ENCODE measurements at regions of chr22 and their contacts with region 1.

Region 1: DNA sequence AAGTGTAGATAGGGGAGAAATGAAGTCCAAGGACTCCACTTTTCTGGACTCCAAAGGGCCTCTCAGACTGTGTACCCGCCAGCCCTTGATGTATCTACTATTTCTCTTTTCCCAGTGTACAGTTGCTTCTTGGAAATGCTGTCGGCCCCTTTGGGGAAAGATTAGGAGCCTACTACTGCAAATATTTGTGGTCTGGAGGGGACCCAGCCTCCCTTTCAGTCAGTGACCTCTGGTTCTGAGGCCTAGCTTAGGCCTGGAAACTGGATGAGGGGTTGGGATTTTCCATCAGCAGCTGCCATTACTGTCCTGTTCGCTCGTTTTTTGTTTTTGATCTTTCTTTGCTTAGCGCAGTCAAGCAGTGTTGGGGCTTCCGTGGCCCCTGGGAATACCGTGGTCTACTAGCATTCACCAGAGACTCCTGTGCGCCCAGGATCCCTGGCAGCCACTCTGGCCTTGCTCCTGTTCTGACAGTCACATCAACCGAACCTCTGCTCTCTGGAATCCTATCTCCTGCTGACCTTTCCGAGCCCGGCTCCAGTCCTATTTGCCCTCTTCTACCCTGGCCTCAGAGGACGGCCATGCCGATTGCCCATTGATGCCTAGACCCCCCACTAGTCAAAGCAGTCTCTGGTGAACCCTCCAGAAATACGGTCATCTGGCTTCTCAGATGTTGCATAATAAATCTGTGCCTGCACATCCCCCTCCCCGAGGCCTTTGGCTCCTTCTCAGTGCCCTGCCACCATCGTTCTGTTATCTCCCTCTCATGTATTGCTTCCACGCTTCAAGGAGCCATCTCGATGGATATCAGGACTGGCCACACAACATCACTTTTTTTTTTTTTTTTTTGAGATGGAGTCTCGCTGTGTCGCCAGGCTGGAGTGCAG is 1.3 kb upstream of the RRP7A start:
- DNase-seq: no peak
- ATAC-seq: no peak
- H3K4me3 ChIP-seq: no peak overlapping the region
- H3K4me3 Mint-ChIP-seq: peak overlapping the region; percentile 30 to 96 (median 54)
- H3K27ac ChIP-seq: no peak overlapping the region
- H3K27ac Mint-ChIP-seq: peak overlapping the region in 8 of 9 donors; percentile 29 to 97 (median 42)
- H3K4me1 ChIP-seq: peaks cover 0 to 8% of the 10 kb centered on the region in 2 donors
- H3K4me1 Mint-ChIP-seq: peaks cover 5 to 20% (median 13%) of the 10 kb centered on the region in 7 donors
- H3K27me3 ChIP-seq: no peaks in the 10 kb centered on the region
- H3K27me3 Mint-ChIP-seq: no peaks in the 10 kb centered on the region

Region 2: DNA sequence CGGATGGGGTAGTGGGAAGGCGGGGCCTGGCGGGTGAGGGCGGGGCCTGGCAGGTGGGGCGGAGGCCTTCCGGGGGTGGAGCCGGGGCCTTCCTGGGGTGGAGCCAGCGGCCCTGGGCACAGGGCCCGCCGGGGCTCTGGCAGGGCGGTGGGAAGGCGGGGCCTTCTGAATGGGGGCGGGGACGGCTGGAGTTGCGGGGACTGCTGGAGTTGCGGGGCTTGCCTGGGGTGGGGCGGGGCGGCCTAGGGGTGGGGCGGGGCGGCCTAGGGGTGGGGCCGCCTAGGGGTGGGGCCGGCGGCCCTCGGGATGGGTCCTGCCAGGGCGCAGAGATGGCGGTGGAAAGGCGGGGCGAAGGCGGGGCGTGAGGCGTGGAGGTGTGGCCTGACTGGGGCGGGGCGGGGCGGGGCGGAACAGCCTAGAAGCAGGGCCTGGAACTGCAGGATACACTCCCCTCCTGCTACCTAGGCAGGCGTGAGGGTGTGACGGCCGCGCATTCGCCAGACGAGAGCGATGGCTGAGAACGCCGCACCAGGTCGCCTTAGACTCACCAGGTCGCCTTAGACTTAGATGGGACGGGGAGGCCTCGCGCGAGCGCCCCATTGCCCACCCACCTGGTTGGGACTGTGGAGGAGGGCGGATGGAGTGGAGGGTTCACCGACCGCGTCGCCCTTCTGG is 20.6 kb before region 1 on chr22:
- CTCF ChIA-PET with region 1: no interaction called
- POLR2A ChIA-PET with region 1: no interaction called
- intact Hi-C with region 1: loop called in 1 of 2 experiments (anchors 2 kb)
- DNase-seq: peak; percentile 69 to 86 (median 82)
- ATAC-seq: peak; percentile 96
- H3K4me3 ChIP-seq: peak overlapping the region; percentile 53
- H3K4me3 Mint-ChIP-seq: peak overlapping the region; percentile 60 to 78 (median 74)
- H3K27ac ChIP-seq: peak overlapping the region; percentile 50
- H3K27ac Mint-ChIP-seq: peak overlapping the region in 3 of 9 donors; percentile 33 to 84 (median 38)
- H3K4me1 ChIP-seq: peaks cover 4 to 5% of the 10 kb centered on the region in 2 donors
- H3K4me1 Mint-ChIP-seq: peaks cover 5 to 17% (median 12%) of the 10 kb centered on the region in 7 donors
- H3K27me3 ChIP-seq: no peaks in the 10 kb centered on the region
- H3K27me3 Mint-ChIP-seq: peaks cover 0 to 2% (median 0%) of the 10 kb centered on the region in 5 donors

Measured in naive thymus-derived CD4-positive, alpha-beta T cell (primary cell).